ENCODE measurements at regions of chr5 and their contacts with region 1.

Region 1: DNA sequence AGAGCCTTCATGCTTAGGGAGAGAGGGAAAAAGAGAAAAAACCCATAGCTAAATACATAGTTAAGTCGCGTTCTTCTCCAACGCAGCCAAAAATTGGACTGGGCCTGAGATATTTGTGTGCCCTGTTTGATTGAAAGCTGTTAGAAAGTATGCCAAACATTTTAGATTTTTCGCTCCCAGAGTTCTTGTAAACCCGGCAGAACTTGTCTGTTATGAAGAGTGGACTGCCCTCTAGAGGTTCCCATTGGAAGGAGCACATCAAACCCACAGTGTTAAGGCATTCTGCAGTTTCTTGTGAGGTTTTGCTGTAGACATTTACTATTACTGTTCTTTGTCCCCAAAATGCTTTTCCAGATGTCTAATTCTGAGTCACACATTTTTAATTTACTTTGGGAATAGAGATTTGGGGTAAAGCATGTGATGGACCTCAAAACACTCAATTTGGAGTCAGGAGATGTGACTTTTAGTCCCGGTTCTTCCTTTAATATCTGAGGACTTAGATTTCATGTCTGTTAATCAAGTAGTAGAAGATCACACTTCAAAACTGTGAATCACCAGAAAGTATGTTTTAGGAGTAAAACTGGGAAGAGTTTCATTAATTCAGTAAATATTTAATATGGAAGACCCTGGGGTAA is 96.6 kb downstream of the PCSK1 start:
- DNase-seq: no peak
- ATAC-seq: peak; percentile 92
- H3K4me3 ChIP-seq: no peak overlapping the region
- H3K27ac ChIP-seq: no peak overlapping the region
- H3K4me1 ChIP-seq: peaks cover 27% of the 10 kb centered on the region
- H3K27me3 ChIP-seq: no peaks in the 10 kb centered on the region; a peak in 1 of 4 replicates
- CTCF ChIP-seq: peak; percentile 87 to 92 (median 88)
- EP300 ChIP-seq: no peak
- POLR2A ChIP-seq: no peak
- RAD21 ChIP-seq: peak; percentile 96

Region 2: DNA sequence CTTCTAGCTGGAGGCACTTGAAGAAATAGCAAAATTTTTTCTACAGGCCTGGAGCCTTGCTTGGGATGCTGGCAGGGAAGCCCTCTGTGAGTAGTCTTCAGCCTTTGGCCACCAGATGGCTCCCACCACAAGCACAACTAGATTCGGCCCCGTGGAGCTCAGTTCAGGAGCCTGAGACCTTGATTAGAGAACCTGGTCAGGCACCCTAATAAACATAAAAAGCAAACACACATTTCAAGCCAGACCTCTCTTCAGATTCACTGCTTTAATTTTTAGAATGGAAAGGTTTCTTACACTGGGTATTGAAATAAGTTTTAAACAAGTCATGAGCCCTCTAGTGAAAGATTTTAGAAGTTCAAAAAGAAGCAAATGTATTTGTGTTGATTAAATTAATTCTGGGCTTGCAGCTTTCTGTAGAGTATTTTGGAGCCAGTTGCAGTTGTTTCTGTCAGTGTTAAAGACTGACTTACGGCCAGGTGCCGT is 555.3 kb before region 1 on chr5:
- CTCF ChIA-PET with region 1: interaction called, 16 read pairs
- POLR2A ChIA-PET with region 1: interaction called, 3 read pairs
- RAD21 ChIA-PET with region 1: interaction called, 3 read pairs
- SMC1A ChIA-PET with region 1: interaction called, 11 read pairs
- in situ Hi-C with region 1: no loop called
- intact Hi-C with region 1: loop called (anchors 5 kb)
- DNase-seq: peak; percentile 51
- ATAC-seq: peak; percentile 100
- H3K4me3 ChIP-seq: no peak overlapping the region
- H3K27ac ChIP-seq: no peak overlapping the region
- H3K4me1 ChIP-seq: no peaks in the 10 kb centered on the region
- H3K27me3 ChIP-seq: no peaks in the 10 kb centered on the region
- CTCF ChIP-seq: peak; percentile 84 to 86 (median 86)
- EP300 ChIP-seq: no peak
- POLR2A ChIP-seq: no peak
- RAD21 ChIP-seq: peak; percentile 95

Region 3: DNA sequence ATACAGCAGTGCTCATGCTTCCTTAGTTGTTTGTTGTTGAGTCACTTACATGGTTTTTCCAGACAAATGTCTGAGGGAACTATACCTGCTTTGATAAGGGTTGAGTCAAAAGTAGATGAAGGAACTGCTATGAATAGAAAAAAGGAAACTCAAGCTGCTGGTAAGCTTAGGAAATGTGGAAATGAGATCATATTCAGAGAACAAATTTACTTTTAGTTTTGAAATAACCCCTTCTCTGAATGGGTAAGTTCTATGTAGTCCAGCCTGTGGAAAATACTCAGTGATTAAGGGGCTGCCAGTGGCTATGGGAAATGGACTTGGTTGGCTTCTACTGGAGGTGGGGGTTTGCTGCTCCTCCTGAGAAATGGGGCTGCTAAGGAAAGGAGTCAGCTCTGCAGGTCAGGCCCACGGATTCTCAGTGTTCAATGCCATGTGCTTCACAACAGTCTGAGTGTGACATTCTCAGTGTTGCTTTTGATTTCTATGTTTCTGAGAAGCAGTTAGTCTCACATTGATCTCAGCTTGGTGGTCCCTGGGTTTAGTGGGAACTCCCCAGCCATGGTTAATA is 466.3 kb before region 1 on chr5:
- CTCF ChIA-PET with region 1: interaction called, 360 read pairs
- POLR2A ChIA-PET with region 1: no interaction called
- RAD21 ChIA-PET with region 1: interaction called, 182 read pairs
- SMC1A ChIA-PET with region 1: interaction called, 289 read pairs
- in situ Hi-C with region 1: no loop called
- intact Hi-C with region 1: no loop called
- DNase-seq: peak; percentile 65
- ATAC-seq: peak; percentile 84
- H3K4me3 ChIP-seq: peak overlapping the region; percentile 54; the same call in 1 of the 2 replicates
- H3K27ac ChIP-seq: peak overlapping the region; percentile 82
- H3K4me1 ChIP-seq: peaks cover 24% of the 10 kb centered on the region
- H3K27me3 ChIP-seq: no peaks in the 10 kb centered on the region
- CTCF ChIP-seq: no peak
- EP300 ChIP-seq: no peak; a peak in 1 of 4 replicates
- POLR2A ChIP-seq: 0 out of 2 replicates have a peak, but pooled peaks have one; percentile 32
- RAD21 ChIP-seq: no peak

Region 4: GRCh38 chr5:95949810-95950209 is 386.7 kb before region 1 on chr5:
- CTCF ChIA-PET with region 1: interaction called, 17 read pairs
- POLR2A ChIA-PET with region 1: no interaction called
- RAD21 ChIA-PET with region 1: interaction called, 6 read pairs
- SMC1A ChIA-PET with region 1: interaction called, 61 read pairs
- in situ Hi-C with region 1: no loop called
- intact Hi-C with region 1: no loop called
- DNase-seq: no peak
- ATAC-seq: peak; percentile 68
- H3K4me3 ChIP-seq: peak overlapping the region; percentile 15; the same call in 1 of the 2 replicates
- H3K27ac ChIP-seq: peak overlapping the region; percentile 67
- H3K4me1 ChIP-seq: peaks cover 18% of the 10 kb centered on the region; the same call in 1 of the 2 replicates
- H3K27me3 ChIP-seq: no peaks in the 10 kb centered on the region
- CTCF ChIP-seq: no peak
- EP300 ChIP-seq: no peak
- POLR2A ChIP-seq: no peak
- RAD21 ChIP-seq: no peak

Region 5: DNA sequence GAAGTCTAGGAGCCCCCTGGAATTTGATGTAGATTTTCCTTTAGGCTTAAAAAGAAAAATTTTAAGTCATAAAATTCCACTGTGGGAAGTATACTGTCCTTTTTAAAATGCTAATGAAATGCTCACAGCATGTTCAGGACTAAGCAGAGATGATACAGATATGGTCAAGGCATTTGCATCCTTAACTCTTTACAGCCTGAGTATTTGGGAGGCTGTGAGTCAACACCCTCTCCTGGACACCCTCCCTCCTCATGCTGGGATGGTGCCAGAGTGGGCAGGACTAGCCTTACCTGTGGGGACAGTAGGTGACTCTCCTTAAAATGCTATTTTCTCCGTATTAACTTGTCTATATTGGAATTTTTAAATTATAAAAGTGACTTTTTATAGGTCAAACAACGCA is 177.4 kb before region 1 on chr5:
- CTCF ChIA-PET with region 1: no interaction called
- POLR2A ChIA-PET with region 1: no interaction called
- RAD21 ChIA-PET with region 1: no interaction called
- SMC1A ChIA-PET with region 1: interaction called, 11 read pairs
- in situ Hi-C with region 1: no loop called
- intact Hi-C with region 1: no loop called
- DNase-seq: no peak
- ATAC-seq: no peak
- H3K4me3 ChIP-seq: no peak overlapping the region
- H3K27ac ChIP-seq: no peak overlapping the region
- H3K4me1 ChIP-seq: no peaks in the 10 kb centered on the region
- H3K27me3 ChIP-seq: no peaks in the 10 kb centered on the region
- CTCF ChIP-seq: no peak
- EP300 ChIP-seq: no peak
- POLR2A ChIP-seq: no peak
- RAD21 ChIP-seq: no peak

Region 6: GRCh38 chr5:96377597-96377996 is 41.1 kb after region 1 on chr5:
- CTCF ChIA-PET with region 1: no interaction called
- POLR2A ChIA-PET with region 1: no interaction called
- RAD21 ChIA-PET with region 1: no interaction called
- SMC1A ChIA-PET with region 1: no interaction called
- in situ Hi-C with region 1: no loop called
- intact Hi-C with region 1: no loop called
- DNase-seq: no peak
- ATAC-seq: no peak
- H3K4me3 ChIP-seq: no peak overlapping the region
- H3K27ac ChIP-seq: no peak overlapping the region
- H3K4me1 ChIP-seq: no peaks in the 10 kb centered on the region
- H3K27me3 ChIP-seq: no peaks in the 10 kb centered on the region; a peak in 1 of 4 replicates
- CTCF ChIP-seq: no peak
- EP300 ChIP-seq: no peak
- POLR2A ChIP-seq: no peak
- RAD21 ChIP-seq: no peak

Region 7: GRCh38 chr5:96427823-96428222 is 91.4 kb after region 1 on chr5:
- CTCF ChIA-PET with region 1: no interaction called
- POLR2A ChIA-PET with region 1: no interaction called
- RAD21 ChIA-PET with region 1: no interaction called
- SMC1A ChIA-PET with region 1: no interaction called
- in situ Hi-C with region 1: no loop called
- intact Hi-C with region 1: no loop called
- DNase-seq: no peak
- ATAC-seq: no peak
- H3K4me3 ChIP-seq: no peak overlapping the region
- H3K27ac ChIP-seq: no peak overlapping the region
- H3K4me1 ChIP-seq: peaks cover 5% of the 10 kb centered on the region; the same call in 1 of the 2 replicates
- H3K27me3 ChIP-seq: peaks cover 0 to 5% of the 10 kb centered on the region in 2 experiments; a peak in 1 of 4 replicates
- CTCF ChIP-seq: no peak
- EP300 ChIP-seq: no peak
- POLR2A ChIP-seq: no peak
- RAD21 ChIP-seq: no peak

Region 8: GRCh38 chr5:96439477-96440184 is 103.2 kb after region 1 on chr5:
- CTCF ChIA-PET with region 1: interaction called, 102 read pairs
- POLR2A ChIA-PET with region 1: no interaction called
- RAD21 ChIA-PET with region 1: interaction called, 10 read pairs
- SMC1A ChIA-PET with region 1: interaction called, 6 read pairs
- in situ Hi-C with region 1: no loop called
- intact Hi-C with region 1: no loop called
- DNase-seq: peak; percentile 56
- ATAC-seq: peak; percentile 96
- H3K4me3 ChIP-seq: peak overlapping the region; percentile 28; the same call in 1 of the 2 replicates
- H3K27ac ChIP-seq: peak overlapping the region; percentile 48
- H3K4me1 ChIP-seq: peaks cover 11% of the 10 kb centered on the region
- H3K27me3 ChIP-seq: no peaks in the 10 kb centered on the region
- CTCF ChIP-seq: peak; percentile 17 to 54 (median 33); a peak in 5 of 6 replicates
- EP300 ChIP-seq: peak in 1 of 2 experiments; percentile 52; a peak in 1 of 4 replicates
- POLR2A ChIP-seq: no peak
- RAD21 ChIP-seq: peak; percentile 49

Region 9: GRCh38 chr5:96781031-96781937 is 444.8 kb after region 1 on chr5:
- CTCF ChIA-PET with region 1: no interaction called
- POLR2A ChIA-PET with region 1: no interaction called
- RAD21 ChIA-PET with region 1: no interaction called
- SMC1A ChIA-PET with region 1: no interaction called
- in situ Hi-C with region 1: no loop called
- intact Hi-C with region 1: no loop called
- DNase-seq: no peak
- ATAC-seq: no peak
- H3K4me3 ChIP-seq: no peak overlapping the region
- H3K27ac ChIP-seq: no peak overlapping the region
- H3K4me1 ChIP-seq: no peaks in the 10 kb centered on the region
- H3K27me3 ChIP-seq: no peaks in the 10 kb centered on the region
- CTCF ChIP-seq: no peak
- EP300 ChIP-seq: no peak
- POLR2A ChIP-seq: no peak
- RAD21 ChIP-seq: no peak

Measured in GM12878 (cell line).